Dorsolateral prefrontal cortex (tissue), 120 donors: ENCODE measurements at regions of chr20 and their contacts with region 1.

Region 1: DNA sequence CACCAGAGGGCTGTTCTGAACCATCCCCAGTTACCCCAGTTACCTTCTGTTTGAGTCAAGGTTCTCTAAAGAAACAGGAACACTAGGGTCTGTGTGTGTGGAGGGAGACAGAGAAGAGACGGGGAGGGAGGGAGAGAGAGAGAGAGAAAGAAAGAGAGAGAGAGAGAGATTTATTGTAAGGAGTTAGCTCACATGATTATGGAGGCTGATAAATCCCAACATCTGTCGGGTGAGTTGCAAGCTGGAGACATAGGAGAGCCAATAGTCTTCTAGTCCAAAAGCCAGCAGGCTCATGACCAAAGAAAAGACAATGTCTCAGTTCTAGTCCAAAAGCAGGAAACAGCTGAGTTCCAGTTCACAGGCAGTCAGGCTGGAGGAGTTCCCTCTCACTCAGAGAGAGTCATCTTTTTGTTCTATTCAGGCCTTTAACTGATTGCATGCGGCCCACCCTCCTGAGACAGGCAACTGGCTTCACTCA is 416.6 kb downstream of the PREX1 start:
- DNase-seq: peak in 2 of 10 donors; percentile 41 to 51
- H3K4me3 ChIP-seq: no peak overlapping the region
- H3K27ac ChIP-seq: peak overlapping the region in 11 of 59 donors; percentile 5 to 68 (median 36)
- H3K27me3 ChIP-seq: peaks cover 0 to 6% (median 0%) of the 10 kb centered on the region in 45 donors
- CTCF ChIP-seq: no peak

Region 2: GRCh38 chr20:48283305-48284080 is 127.7 kb before region 1 on chr20:
- intact Hi-C with region 1: loop called (anchors 5 kb)
- DNase-seq: peak; percentile 13 to 93 (median 83)
- H3K4me3 ChIP-seq: no peak overlapping the region
- H3K27ac ChIP-seq: peak overlapping the region in 26 of 59 donors; percentile 0 to 74 (median 47)
- H3K27me3 ChIP-seq: no peaks in the 10 kb centered on the region
- CTCF ChIP-seq: peak in 9 of 56 donors; percentile 13 to 37 (median 27)